Common myeloid progenitor, CD34-positive (primary cell): ENCODE measurements at regions of chr22 and their contacts with region 1.

Region 1: GRCh38 chr22:49852898-49853894 is at the start of gene ZBED4:
- DNase-seq: peak; percentile 96 to 98 (median 98)
- H3K4me3 ChIP-seq: peak within 1 kb of the TSS; percentile 46 to 99 (median 89)
- H3K27ac ChIP-seq: peak within 1 kb of the TSS; percentile 93 to 95
- H3K4me1 ChIP-seq: peaks cover 5 to 70% (median 65%) of the 10 kb centered on the region in 4 experiments
- H3K27me3 ChIP-seq: no peaks in the 10 kb centered on the region

Region 2: GRCh38 chr22:49917974-49918910 is 65.0 kb after region 1 on chr22 and contains the starts of genes ALG12 and CRELD2:
- CTCF ChIA-PET with region 1: no interaction called
- POLR2A ChIA-PET with region 1: interaction called, 17 read pairs
- DNase-seq: peak; percentile 96 to 97 (median 97)
- H3K4me3 ChIP-seq: peak within 1 kb of the TSS; percentile 67 to 97 (median 83)
- H3K27ac ChIP-seq: peak within 1 kb of the TSS; percentile 58 to 86
- H3K4me1 ChIP-seq: peaks cover 2 to 25% (median 21%) of the 10 kb centered on the region in 4 experiments
- H3K27me3 ChIP-seq: no peaks in the 10 kb centered on the region